ENCODE measurements at regions of chr7 and their contacts with region 1.

Region 1: GRCh38 chr7:47088329-47089067 is 493.4 kb downstream of the TNS3 start:
- DNase-seq: peak; percentile 74
- ATAC-seq: peak; percentile 78
- H3K4me3 ChIP-seq: no peak overlapping the region
- H3K27ac ChIP-seq: peak overlapping the region; percentile 23; the same call in 1 of the 2 replicates
- H3K4me1 ChIP-seq: peaks cover 14% of the 10 kb centered on the region
- H3K27me3 ChIP-seq: no peaks in the 10 kb centered on the region
- CTCF ChIP-seq: peak; percentile 87

Region 2: GRCh38 chr7:45923290-45923689 is 1165.2 kb before region 1 on chr7:
- CTCF ChIA-PET with region 1: no interaction called
- POLR2A ChIA-PET with region 1: interaction called, 3 read pairs
- intact Hi-C with region 1: loop called (anchors 1 kb)
- DNase-seq: peak; percentile 83
- ATAC-seq: peak; percentile 28
- H3K4me3 ChIP-seq: peak overlapping the region; percentile 80
- H3K27ac ChIP-seq: peak overlapping the region; percentile 55
- H3K4me1 ChIP-seq: peaks cover 47% of the 10 kb centered on the region
- H3K27me3 ChIP-seq: no peaks in the 10 kb centered on the region
- CTCF ChIP-seq: peak; percentile 97

Region 3: GRCh38 chr7:46486256-46487206 is 602.0 kb before region 1 on chr7:
- CTCF ChIA-PET with region 1: no interaction called
- POLR2A ChIA-PET with region 1: no interaction called
- intact Hi-C with region 1: loop called (anchors 2 kb)
- DNase-seq: peak; percentile 80
- ATAC-seq: peak; percentile 82
- H3K4me3 ChIP-seq: peak overlapping the region; percentile 7; the same call in 1 of the 2 replicates
- H3K27ac ChIP-seq: peak overlapping the region; percentile 88
- H3K4me1 ChIP-seq: peaks cover 39% of the 10 kb centered on the region
- H3K27me3 ChIP-seq: no peaks in the 10 kb centered on the region
- CTCF ChIP-seq: no peak

Region 4: GRCh38 chr7:46752881-46753366 is 335.6 kb before region 1 on chr7:
- CTCF ChIA-PET with region 1: no interaction called
- POLR2A ChIA-PET with region 1: no interaction called
- intact Hi-C with region 1: loop called (anchors 2 kb)
- DNase-seq: peak; percentile 87
- ATAC-seq: peak; percentile 85
- H3K4me3 ChIP-seq: no peak overlapping the region
- H3K27ac ChIP-seq: peak overlapping the region; percentile 62
- H3K4me1 ChIP-seq: peaks cover 34% of the 10 kb centered on the region
- H3K27me3 ChIP-seq: no peaks in the 10 kb centered on the region
- CTCF ChIP-seq: no peak

Region 5: GRCh38 chr7:46786221-46786954 is 302.1 kb before region 1 on chr7:
- CTCF ChIA-PET with region 1: no interaction called
- POLR2A ChIA-PET with region 1: no interaction called
- intact Hi-C with region 1: loop called (anchors 2 kb)
- DNase-seq: peak; percentile 96
- ATAC-seq: peak; percentile 91
- H3K4me3 ChIP-seq: peak overlapping the region; percentile 31; the same call in 1 of the 2 replicates
- H3K27ac ChIP-seq: peak overlapping the region; percentile 96
- H3K4me1 ChIP-seq: peaks cover 38% of the 10 kb centered on the region
- H3K27me3 ChIP-seq: no peaks in the 10 kb centered on the region
- CTCF ChIP-seq: no peak; the same call in 1 of the 2 replicates

Region 6: DNA sequence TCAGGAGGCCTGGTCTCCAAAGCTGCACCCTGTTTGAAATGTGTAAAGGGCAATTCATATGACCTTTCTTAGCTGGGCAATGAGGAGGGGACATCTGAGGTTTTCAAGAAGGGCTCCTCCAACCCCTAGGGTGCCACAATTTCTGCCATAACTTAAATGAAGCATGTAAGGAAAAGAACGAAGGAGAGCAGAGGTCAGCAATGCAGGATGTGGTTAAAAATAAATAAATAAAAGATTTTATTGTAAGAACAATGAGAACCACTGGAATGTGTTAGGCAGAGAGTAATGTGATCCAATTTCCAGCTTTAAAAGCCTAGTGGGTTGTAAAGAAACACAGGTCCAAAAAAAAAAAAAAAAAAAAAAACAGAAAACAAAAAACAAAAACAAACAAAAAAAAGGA is 179.7 kb before region 1 on chr7:
- CTCF ChIA-PET with region 1: interaction called, 3 read pairs
- POLR2A ChIA-PET with region 1: no interaction called
- intact Hi-C with region 1: loop called (anchors 1 kb)
- DNase-seq: peak; percentile 80
- ATAC-seq: peak; percentile 78
- H3K4me3 ChIP-seq: peak overlapping the region; percentile 53
- H3K27ac ChIP-seq: peak overlapping the region; percentile 79
- H3K4me1 ChIP-seq: peaks cover 26% of the 10 kb centered on the region
- H3K27me3 ChIP-seq: no peaks in the 10 kb centered on the region
- CTCF ChIP-seq: no peak

Measured in PC-3 (cell line).